ENCODE measurements at regions of chr11 and their contacts with region 1.

Region 1: DNA sequence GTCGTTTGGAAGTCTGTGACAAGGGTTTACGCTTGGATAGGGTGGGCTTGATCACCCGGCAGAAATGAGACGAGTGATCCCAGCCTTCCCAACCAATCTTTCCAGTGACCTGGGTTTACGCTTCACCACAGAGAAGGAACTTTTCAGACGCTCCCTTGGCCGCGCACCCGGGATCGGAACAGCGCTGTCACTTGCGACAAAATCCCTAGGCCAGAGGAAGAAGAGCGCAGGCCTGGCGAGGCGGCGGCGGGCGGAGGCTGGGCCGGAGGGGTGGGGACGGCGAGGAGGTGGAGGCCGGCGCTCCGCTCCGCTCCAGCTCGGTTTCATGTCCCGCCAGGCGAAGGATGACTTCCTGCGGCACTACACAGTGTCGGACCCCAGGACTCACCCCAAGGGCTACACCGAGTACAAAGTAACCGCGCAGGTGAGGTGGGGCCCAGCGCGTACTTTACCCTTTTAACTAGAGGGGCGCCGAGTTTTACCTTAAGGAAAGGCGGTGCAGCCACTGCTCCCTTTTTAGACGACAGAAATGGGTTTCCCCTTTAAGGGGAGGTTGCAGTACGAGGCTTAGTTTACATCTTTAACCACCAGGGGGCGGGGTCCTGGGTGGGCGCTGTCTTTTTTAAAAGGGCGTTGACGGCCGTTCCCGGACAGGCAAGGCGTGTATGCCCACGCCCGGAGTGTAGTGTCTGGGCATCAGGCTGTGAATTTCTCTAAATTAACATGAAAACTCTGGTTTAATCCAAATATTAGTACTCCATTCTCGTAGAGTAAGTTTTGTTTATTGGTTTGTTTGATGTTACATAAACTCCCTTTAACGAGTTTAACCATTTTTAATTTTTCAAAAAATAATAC is at the start of gene SNX15:
- DNase-seq: peak; percentile 97
- ATAC-seq: peak; percentile 93
- H3K4me3 ChIP-seq: peak within 1 kb of the TSS; percentile 39 to 44
- H3K27ac ChIP-seq: peak within 1 kb of the TSS; percentile 75
- H3K4me1 ChIP-seq: peaks cover 11 to 22% of the 10 kb centered on the region in 2 experiments; a peak in 3 of 4 replicates
- H3K27me3 ChIP-seq: no peaks in the 10 kb centered on the region
- CTCF ChIP-seq: peak; percentile 12 to 61 (median 42); a peak in 4 of 6 replicates
- POLR2A ChIP-seq: peak; percentile 49
- RAD21 ChIP-seq: no peak
- total RNA-seq, gene SNX15: 16.8 TPM

Region 2: DNA sequence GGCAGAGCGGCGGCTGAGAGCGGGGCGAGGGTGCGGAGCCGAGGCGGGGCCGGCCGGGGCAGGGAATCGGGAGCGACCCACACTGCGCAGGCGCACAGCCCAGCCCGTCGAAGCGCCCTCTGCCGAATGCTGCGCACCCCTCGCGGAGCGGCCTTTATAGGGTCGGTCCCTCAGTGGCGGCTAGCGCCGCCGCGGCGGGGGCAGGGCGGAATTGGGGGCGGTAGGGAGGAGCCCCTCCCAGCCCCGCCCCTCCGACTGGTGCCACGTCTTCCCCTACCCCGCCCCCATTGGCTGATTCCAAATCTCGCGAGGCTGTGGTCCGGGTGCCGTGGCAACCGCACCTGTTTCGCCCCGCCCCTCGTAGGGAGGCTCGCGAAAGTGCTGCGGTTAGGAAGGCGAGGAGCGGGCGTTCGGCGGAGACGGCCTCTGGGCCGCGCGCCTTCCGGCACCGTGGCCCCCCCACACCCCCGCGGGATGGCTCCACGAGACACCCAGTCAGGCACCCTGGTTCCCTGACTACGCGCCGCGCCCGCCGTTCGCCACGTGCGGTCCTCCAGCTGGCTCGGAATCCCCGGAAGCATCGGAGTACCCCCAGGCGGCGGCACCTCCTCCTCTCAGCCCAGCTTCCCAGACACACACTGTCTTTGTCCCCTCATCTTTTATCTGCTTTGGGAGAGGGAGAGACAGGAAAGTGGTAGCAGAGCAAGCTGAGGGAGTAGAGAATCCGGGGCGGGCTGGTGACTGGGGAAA is 148.8 kb before region 1 on chr11 and contains the start of gene EHD1:
- CTCF ChIA-PET with region 1: no interaction called
- POLR2A ChIA-PET with region 1: no interaction called
- RAD21 ChIA-PET with region 1: no interaction called
- intact Hi-C with region 1: loop called (anchors 1 kb)
- DNase-seq: peak; percentile 92
- ATAC-seq: peak; percentile 88
- H3K4me3 ChIP-seq: peak within 1 kb of the TSS; percentile 95 to 99
- H3K27ac ChIP-seq: peak within 1 kb of the TSS; percentile 84
- H3K4me1 ChIP-seq: peaks cover 22 to 33% of the 10 kb centered on the region in 2 experiments
- H3K27me3 ChIP-seq: no peaks in the 10 kb centered on the region
- CTCF ChIP-seq: peak; percentile 34 to 52 (median 36); a peak in 5 of 6 replicates
- POLR2A ChIP-seq: peak; percentile 89
- RAD21 ChIP-seq: no peak; the same call in none of the 2 replicates
- total RNA-seq, gene EHD1: 48.1 TPM

Region 3: DNA sequence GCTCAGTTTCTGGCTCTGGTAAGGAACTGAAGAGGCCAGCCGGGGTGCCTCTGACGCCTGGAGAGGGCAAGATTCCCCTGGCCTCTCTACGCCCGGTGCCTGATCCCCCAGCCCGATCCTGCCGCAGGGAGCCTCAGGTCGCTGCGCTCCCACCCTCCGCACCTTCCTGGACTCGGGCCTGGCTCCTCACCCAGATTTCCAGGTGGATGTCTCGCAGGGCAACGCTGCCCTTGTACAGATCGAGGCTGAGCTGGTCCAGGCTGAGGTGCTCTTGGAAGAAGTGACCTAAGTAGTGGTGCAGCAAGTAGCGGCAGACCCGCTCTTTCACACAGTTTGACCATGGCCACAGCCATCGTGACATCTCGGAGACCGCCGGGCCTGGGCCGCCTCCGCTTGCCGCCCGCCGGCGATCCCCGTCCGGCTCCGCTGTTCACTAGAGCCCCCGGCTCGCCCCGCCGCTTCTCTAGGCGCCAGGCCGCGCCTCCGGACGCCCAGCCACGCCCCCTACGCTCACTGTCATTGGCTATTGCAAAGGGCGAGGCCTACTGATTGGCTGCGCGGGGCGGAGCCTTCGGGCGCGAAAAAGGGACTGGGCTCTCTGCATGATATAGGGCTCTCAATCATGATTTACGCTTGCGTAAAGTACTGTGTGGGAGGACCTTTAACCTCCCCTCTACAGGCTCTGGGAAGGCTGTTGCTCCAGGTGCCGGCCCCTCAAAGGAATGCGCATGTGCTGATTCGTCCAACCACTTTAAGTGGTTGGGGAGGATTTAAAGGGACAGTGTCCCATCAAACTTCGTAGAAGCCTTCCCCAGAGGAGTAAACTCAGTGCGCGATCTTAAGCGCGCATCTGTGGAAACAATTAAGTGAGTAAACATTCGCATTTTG is 110.4 kb before region 1 on chr11 and contains the start of gene ATG2A:
- CTCF ChIA-PET with region 1: no interaction called
- POLR2A ChIA-PET with region 1: no interaction called
- RAD21 ChIA-PET with region 1: no interaction called
- intact Hi-C with region 1: loop called (anchors 5 kb)
- DNase-seq: peak; percentile 99
- ATAC-seq: peak; percentile 97
- H3K4me3 ChIP-seq: peak within 1 kb of the TSS; percentile 82 to 84
- H3K27ac ChIP-seq: peak within 1 kb of the TSS; percentile 69
- H3K4me1 ChIP-seq: peaks cover 16 to 29% of the 10 kb centered on the region in 2 experiments
- H3K27me3 ChIP-seq: no peaks in the 10 kb centered on the region
- CTCF ChIP-seq: no peak
- POLR2A ChIP-seq: peak; percentile 37
- RAD21 ChIP-seq: no peak
- total RNA-seq, gene ATG2A: 24.7 TPM

Region 4: DNA sequence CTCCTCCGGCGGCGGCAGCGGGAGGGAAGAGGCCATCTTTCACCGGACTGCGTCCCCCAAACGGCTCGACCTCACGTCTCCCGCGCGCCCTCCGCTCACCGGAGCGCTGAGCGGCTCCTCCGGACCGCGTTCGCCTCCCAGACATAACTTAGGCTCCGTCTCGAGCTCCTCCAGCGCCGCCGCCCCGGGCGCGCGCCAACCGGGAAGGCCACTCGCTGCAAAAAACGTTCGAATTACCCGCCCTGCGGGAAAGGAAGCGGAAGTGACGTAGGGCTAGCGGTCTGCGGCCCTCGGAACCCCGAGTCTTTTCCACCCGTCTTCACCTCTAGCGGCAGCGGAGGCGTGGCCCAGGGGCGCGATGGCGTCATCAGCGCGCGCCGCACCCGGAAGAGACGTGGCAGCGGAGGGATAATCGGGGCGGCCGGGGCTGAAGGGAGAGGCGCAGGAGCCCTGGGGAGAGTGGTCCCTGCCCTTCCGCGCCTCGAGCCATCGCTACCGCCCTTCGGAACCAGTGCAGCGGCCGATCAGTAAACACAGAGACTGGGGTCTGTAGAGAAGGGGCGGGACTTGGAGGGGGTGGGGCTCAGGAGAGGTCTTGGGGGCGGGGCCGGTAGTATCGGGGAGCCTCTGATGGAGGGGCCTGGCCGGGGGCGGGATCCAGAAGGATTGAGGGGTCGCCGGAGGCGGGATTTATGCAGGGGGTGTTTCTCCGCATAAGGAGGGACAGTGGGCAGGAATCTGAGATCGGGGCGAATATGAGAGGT is 56.6 kb after region 1 on chr11 and contains the starts of genes CDCA5 and ZFPL1:
- CTCF ChIA-PET with region 1: no interaction called
- POLR2A ChIA-PET with region 1: no interaction called
- RAD21 ChIA-PET with region 1: no interaction called
- intact Hi-C with region 1: loop called (anchors 5 kb)
- DNase-seq: peak; percentile 91
- ATAC-seq: peak; percentile 85
- H3K4me3 ChIP-seq: peak within 1 kb of the TSS; percentile 86 to 98
- H3K27ac ChIP-seq: peak within 1 kb of the TSS; percentile 82
- H3K4me1 ChIP-seq: peaks cover 7 to 22% of the 10 kb centered on the region in 2 experiments; a peak in 3 of 4 replicates
- H3K27me3 ChIP-seq: no peaks in the 10 kb centered on the region
- CTCF ChIP-seq: no peak
- POLR2A ChIP-seq: peak; percentile 49
- RAD21 ChIP-seq: no peak
- total RNA-seq, gene CDCA5: 72.1 TPM
- total RNA-seq, gene ZFPL1: 35.3 TPM

Region 5: DNA sequence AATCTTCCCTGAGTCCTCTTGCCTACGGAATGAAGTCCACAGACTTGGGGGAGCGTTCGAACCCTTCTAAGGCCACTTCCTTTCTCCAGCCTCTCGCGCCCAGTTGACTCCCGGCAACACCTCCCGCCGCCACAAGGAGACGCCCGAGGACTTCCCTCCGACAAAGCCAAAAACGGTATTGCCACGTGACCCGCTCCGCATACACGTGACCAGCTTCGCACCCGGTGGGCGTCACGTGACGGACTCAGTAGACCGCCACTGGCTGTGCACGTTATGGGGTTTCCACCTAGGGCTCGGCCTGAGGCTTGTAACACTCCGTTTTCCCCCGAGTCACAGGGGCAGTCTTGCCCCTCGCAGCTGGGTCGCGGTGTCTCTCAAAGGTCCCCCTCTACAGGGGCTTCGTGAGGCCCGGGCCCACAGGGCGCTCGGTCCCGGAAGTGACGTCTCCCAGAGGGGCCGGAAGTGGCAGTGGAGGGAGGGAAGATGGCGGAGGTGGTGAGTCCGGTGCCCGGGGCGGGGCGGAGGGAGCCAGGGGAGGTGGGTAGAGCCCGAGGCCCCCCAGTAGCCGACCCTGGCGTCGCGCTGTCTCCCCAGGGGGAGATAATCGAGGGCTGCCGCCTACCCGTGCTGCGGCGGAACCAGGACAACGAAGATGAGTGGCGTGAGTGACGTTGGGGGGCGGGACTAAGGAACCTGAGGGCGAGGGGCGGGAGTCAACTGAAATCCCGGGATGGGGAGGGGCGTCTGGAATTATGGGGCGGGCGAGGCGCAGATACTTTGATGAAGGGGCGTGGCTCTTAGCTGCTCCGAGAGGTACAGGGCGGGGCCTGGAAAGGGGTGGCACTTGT is 684.6 kb after region 1 on chr11 and contains the start of gene KAT5:
- CTCF ChIA-PET with region 1: no interaction called
- POLR2A ChIA-PET with region 1: no interaction called
- RAD21 ChIA-PET with region 1: no interaction called
- intact Hi-C with region 1: no loop called
- DNase-seq: peak; percentile 98
- ATAC-seq: peak; percentile 80
- H3K4me3 ChIP-seq: peak within 1 kb of the TSS; percentile 64 to 72
- H3K27ac ChIP-seq: peak within 1 kb of the TSS; percentile 93
- H3K4me1 ChIP-seq: peaks cover 10 to 33% of the 10 kb centered on the region in 2 experiments; a peak in 3 of 4 replicates
- H3K27me3 ChIP-seq: no peaks in the 10 kb centered on the region
- CTCF ChIP-seq: peak in 2 of 3 experiments; percentile 94 to 97; a peak in 4 of 6 replicates
- POLR2A ChIP-seq: peak; percentile 23
- RAD21 ChIP-seq: no peak
- total RNA-seq, gene KAT5: 78.7 TPM